AG04450 (cell line): ENCODE measurements at regions of chr17 and their contacts with region 1.

Region 1: GRCh38 chr17:49227436-49228261 is 2.9 kb downstream of the PHOSPHO1 start:
- DNase-seq: peak; percentile 26
- H3K4me3 ChIP-seq: no peak overlapping the region
- H3K27ac ChIP-seq: no peak overlapping the region
- H3K27me3 ChIP-seq: peaks cover 56% of the 10 kb centered on the region
- CTCF ChIP-seq: peak; percentile 84

Region 2: DNA sequence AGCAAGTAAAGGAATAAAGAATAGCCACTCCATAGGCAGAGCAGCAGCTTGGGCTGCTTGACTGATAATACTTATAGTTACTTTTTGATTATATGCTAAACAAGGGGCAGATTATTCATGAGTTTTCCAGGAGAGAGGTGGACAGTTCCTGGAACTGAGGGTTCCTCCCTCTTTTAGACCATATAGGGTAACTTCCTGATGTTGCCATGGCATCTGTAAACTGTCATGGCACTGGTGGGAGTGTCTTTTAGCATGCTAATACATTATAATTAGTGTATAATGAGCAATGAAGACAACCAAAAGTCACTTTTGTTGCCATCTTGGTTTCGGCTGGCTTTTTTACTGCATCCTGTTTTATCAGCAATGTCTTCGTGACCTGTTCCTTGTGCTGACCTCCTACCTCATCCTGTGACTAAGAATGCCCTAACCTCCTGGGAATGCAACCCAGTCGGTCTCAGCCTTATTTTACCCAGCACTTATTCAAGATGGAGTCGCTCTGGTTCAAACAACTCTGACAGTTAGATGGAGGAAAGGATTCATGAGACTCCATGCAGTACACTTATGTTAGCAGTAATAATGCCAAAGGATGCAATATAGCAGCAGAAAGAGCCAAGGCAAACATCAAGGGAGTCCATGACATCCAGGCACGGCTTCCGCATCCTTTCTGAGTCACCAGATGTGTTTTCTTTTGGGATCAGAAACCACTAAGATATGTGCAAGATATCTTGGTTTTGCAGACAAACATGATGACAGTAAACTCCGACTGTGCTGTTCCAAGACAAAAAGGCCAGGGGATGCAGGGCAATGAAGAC is 150.9 kb before region 1 on chr17:
- CTCF ChIA-PET with region 1: interaction called, 14 read pairs
- POLR2A ChIA-PET with region 1: no interaction called
- DNase-seq: peak; percentile 53
- H3K4me3 ChIP-seq: no peak overlapping the region
- H3K27ac ChIP-seq: peak overlapping the region; percentile 63
- H3K27me3 ChIP-seq: no peaks in the 10 kb centered on the region
- CTCF ChIP-seq: no peak

Region 3: GRCh38 chr17:49180303-49180702 is 47.3 kb before region 1 on chr17:
- CTCF ChIA-PET with region 1: interaction called, 42 read pairs
- POLR2A ChIA-PET with region 1: no interaction called
- DNase-seq: no peak
- H3K4me3 ChIP-seq: no peak overlapping the region
- H3K27ac ChIP-seq: no peak overlapping the region
- H3K27me3 ChIP-seq: peaks cover 6% of the 10 kb centered on the region
- CTCF ChIP-seq: peak; percentile 82

Region 4: GRCh38 chr17:49210158-49211029 is 17.3 kb before region 1 on chr17 and contains the starts of genes ABI3 and GNGT2:
- CTCF ChIA-PET with region 1: interaction called, 10 read pairs
- POLR2A ChIA-PET with region 1: no interaction called
- DNase-seq: no peak
- H3K4me3 ChIP-seq: no peak within 1 kb of the TSS
- H3K27ac ChIP-seq: no peak within 1 kb of the TSS
- H3K27me3 ChIP-seq: peaks cover 8% of the 10 kb centered on the region
- CTCF ChIP-seq: no peak
- polyA plus RNA-seq, gene ABI3: 0.12 and 0.21 TPM in 2 replicates
- polyA plus RNA-seq, gene GNGT2: 0.16 and 0.21 TPM in 2 replicates

Region 5: DNA sequence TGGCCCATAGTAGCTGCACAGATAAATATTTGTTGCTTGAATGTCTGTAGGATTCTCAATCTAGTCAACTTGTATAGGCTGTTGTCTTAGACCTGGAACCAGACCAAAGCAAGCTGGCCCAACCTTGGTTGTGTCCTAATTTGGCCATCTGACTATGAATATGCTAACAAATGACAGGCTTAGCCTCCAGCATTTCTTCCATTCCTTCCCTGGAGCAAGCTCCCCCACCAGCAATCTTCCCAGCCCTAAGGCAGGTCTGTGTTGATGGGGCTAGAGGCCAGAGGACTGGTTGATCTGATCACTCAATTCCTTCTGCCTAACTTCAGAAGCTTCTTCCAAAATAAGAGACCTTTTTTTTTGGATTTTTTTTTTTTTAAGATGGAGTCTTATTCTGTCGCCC is 12.3 kb after region 1 on chr17:
- CTCF ChIA-PET with region 1: interaction called, 10 read pairs
- POLR2A ChIA-PET with region 1: no interaction called
- DNase-seq: no peak
- H3K4me3 ChIP-seq: no peak overlapping the region
- H3K27ac ChIP-seq: no peak overlapping the region
- H3K27me3 ChIP-seq: peaks cover 21% of the 10 kb centered on the region
- CTCF ChIP-seq: no peak

Region 6: GRCh38 chr17:49254066-49254465 is 26.4 kb after region 1 on chr17:
- CTCF ChIA-PET with region 1: interaction called, 14 read pairs
- POLR2A ChIA-PET with region 1: no interaction called
- DNase-seq: no peak
- H3K4me3 ChIP-seq: no peak overlapping the region
- H3K27ac ChIP-seq: no peak overlapping the region
- H3K27me3 ChIP-seq: peaks cover 18% of the 10 kb centered on the region
- CTCF ChIP-seq: no peak

Region 7: DNA sequence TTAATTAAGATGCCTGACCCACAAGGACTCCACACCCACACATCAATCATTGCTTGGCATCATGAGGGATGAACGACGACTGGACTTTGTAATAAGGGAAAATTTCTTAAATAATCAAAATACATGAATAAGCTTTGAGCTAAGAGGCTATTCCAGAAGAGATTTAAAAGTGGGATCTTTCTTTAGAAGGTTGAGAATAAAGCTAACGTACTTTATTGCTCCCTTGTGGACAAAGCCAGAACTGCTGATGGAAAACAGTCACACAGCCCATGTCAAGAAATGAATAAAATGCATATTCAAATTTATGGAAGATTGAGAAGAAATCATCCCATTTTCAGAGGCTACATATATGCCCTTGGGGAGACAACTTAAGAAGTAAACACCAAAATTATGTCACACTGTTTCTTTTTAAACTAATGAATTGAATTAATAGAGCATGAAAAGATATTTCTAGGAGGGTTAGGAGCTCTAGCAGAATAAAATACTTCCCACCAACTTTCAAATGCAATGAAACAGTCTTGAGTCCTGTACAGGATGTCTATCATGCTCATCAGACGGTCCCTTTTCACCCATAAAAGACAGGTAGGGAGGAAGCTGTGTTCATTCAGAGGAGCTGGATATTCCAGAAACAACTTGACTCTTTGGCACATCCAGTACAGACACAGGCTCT is 63.2 kb after region 1 on chr17:
- CTCF ChIA-PET with region 1: interaction called, 13 read pairs
- POLR2A ChIA-PET with region 1: no interaction called
- DNase-seq: no peak
- H3K4me3 ChIP-seq: no peak overlapping the region
- H3K27ac ChIP-seq: no peak overlapping the region
- H3K27me3 ChIP-seq: no peaks in the 10 kb centered on the region
- CTCF ChIP-seq: peak; percentile 79

Region 8: DNA sequence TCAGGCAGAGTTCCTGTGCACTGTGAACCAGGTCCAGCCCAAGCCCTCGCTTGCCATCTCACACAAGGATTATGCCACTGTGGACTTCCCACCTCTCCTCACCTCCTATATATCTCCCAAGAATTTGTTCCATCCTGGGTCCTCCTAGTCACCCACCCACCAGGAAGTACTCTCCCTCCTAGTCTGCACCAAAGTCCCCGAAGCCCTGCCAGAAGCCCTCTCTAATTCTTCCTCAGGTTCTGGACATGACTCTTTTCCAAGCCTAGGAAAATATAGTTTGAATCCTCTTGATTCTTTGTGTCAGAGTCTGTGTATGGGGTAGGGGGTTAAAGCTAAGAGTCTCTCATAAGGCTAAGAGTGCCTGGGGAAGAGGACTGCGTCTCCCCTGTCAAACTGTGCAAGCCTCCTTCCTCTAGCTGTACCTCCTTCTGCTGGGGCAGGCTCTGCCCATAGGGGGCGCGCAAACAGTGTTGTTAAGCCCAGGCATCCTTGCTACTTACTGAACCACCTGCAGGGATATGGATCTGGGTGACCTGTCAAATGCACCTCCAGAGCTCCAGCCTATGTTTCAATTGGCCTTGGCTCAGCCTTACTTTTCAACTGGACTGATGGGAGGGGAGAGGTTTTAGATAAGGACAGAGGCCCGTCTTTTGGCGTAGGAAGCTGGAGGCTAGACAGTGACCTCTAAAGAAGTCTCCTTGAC is 724.7 kb after region 1 on chr17:
- CTCF ChIA-PET with region 1: no interaction called
- POLR2A ChIA-PET with region 1: no interaction called
- DNase-seq: peak; percentile 11
- H3K4me3 ChIP-seq: no peak overlapping the region
- H3K27ac ChIP-seq: no peak overlapping the region
- H3K27me3 ChIP-seq: peaks cover 57% of the 10 kb centered on the region
- CTCF ChIP-seq: peak; percentile 79